ENCODE measurements at regions of chr16 and their contacts with region 1.

Region 1: GRCh38 chr16:61862221-61863155 is 173.8 kb downstream of the CDH8 start:
- DNase-seq: peak in 1 of 10 donors; percentile 14
- H3K4me3 ChIP-seq: peak overlapping the region in 41 of 59 donors; percentile 1 to 59 (median 34)
- H3K27ac ChIP-seq: peak overlapping the region; percentile 13 to 98 (median 91)
- H3K27me3 ChIP-seq: no peaks in the 10 kb centered on the region
- CTCF ChIP-seq: peak in 2 of 56 donors; percentile 10 to 17

Region 2: DNA sequence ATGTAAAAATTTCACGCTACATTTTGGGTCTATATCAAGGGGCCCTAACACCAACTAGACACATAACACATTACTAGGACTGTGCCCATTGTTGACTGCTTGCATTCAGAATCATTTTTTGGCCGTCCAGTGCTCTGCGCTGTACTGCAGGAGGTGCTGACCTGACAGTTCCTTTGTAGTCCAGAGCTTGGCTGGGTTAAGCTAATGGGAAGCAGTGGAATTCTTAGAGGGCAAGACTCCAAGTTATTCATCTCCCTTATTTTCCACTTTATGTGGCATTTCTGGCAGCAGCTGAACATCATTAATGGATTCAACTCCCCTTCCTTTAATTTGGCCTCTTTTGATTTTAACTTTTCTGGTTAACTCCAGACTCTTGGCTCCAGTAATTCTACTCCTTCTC is 177.9 kb before region 1 on chr16:
- intact Hi-C with region 1: loop called in 1 of 2 experiments (anchors 10 kb)
- DNase-seq: no peak
- H3K4me3 ChIP-seq: no peak overlapping the region
- H3K27ac ChIP-seq: no peak overlapping the region
- H3K27me3 ChIP-seq: no peaks in the 10 kb centered on the region
- CTCF ChIP-seq: no peak